OCI-LY7 (cell line): ENCODE measurements at regions of chr2 and their contacts with region 1.

Region 1: DNA sequence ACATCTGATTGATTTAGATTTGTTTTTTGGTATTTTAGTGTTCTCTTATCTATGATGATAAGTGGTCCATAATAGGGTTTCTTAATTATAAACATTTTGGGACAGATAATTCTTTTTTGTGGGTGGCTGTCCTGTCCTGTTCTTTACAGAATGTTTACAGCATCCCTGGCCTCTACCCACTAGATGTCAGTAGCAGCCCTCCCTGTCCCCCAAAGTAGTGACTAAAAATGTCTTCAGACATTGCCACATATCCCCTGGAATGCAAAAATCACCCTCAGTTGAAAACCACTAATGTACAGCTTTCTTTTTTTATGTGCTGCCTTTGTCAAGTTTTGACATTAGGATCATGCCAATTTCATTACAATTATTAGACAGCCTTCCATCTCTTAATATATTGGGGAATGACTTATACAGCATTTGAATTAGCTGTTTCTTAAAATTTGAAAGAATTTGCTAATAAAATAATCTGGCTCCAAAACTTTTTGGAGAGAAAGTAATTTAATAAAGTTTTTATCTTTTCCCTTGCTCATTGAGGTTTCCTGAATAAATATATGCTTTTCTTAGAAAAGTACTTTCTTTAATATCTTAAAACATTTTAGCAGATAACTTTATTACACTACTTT is 19.5 kb downstream of the WIPF1 start:
- DNase-seq: peak; percentile 69
- H3K4me3 ChIP-seq: no peak overlapping the region
- H3K27ac ChIP-seq: no peak overlapping the region
- H3K4me1 ChIP-seq: peaks cover 8% of the 10 kb centered on the region
- CTCF ChIP-seq: peak; percentile 92

Region 2: GRCh38 chr2:174603280-174603679 is 25.2 kb after region 1 on chr2:
- CTCF ChIA-PET with region 1: interaction called, 3 read pairs
- POLR2A ChIA-PET with region 1: interaction called, 21 read pairs
- intact Hi-C with region 1: loop called (anchors 1 kb)
- DNase-seq: peak; percentile 74
- H3K4me3 ChIP-seq: no peak overlapping the region
- H3K27ac ChIP-seq: no peak overlapping the region
- H3K4me1 ChIP-seq: peaks cover 79% of the 10 kb centered on the region
- CTCF ChIP-seq: peak; percentile 88

Region 3: DNA sequence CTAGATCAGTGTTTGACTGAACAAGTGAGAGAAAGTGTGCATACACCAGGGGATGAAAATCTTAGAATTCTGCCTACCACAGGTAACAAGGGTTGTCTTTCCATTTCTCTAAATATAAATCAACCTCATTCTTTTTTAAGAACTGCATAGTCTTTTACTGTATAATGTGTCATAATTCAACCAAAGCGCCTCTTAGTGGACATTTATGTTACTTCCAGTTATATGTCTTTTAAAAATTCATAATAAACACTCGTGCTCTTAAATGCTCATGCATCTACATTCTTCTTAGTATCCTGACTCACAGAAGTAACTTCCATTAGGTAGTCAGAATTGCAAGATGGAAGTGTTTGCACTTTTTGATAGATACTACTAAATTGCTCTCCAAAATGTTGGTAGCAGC is 110.0 kb after region 1 on chr2:
- CTCF ChIA-PET with region 1: no interaction called
- POLR2A ChIA-PET with region 1: no interaction called
- intact Hi-C with region 1: loop called (anchors 1 kb)
- DNase-seq: peak; percentile 61
- H3K4me3 ChIP-seq: no peak overlapping the region
- H3K27ac ChIP-seq: no peak overlapping the region
- H3K4me1 ChIP-seq: no peaks in the 10 kb centered on the region
- CTCF ChIP-seq: peak; percentile 88